ENCODE measurements at regions of chr5 and their contacts with region 1.

Region 1: DNA sequence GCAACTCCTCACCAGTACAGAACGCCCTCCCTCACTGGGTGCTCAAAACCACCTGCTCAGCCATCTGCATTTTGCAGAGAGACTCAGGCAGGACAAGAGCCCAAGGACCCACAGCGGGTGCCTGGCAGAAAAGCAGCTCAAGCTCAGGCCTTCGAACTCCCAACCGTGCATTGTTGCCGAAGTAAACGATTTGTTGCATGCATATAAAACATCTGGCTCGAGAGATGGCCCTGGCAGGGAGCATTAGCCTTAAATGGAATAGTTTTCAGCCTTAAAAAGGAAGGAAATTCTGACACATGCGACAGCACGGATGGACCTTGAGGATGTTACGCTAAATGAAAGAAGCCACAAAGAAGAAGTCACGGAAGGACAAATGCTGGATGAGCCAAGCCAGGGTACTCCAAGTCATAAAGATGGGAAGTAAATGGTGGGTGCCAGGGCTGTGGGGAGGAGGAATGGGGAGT is 160.4 kb upstream of the PHYKPL start:
- DNase-seq: no peak
- H3K4me3 ChIP-seq: no peak overlapping the region
- H3K27ac ChIP-seq: no peak overlapping the region
- H3K4me1 ChIP-seq: no peaks in the 10 kb centered on the region
- H3K27me3 ChIP-seq: no peaks in the 10 kb centered on the region
- CTCF ChIP-seq: no peak

Region 2: DNA sequence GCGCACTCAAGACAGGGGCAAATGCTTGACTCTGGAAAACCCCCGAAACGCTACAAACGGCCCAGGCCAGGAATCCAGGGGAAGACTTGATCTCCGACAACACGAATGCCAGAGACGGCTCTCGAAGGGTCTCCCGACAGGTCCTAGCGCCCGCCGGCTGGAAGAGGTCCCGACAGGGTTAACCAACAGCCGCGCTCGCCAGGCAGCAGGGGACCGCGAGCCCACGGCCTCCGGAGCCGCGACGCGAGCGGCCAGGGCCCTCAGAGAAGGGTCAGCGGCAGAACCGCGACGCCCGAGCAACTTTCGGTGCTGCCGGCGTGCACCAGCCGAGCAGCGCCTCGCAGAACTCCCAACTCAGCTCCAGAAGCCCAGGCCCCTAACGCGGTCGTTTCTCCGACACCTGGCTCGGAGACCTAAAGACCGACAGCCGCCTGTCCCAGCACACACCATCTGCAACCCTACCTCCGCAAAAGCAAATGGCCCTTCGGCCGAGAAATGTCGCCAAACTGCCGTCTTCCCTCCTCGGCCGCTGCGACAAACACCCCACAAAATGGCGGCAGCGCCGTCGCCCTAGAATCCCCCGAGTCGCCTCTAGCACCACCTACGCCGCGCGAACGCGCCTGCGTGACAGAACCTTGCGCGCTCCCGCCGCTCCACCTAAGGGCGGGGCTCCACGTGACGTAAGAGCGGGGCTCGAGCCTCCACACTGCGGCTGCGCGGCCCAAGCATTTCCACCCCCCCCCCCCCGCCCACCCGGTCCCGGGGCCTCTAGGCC is 233.7 kb after region 1 on chr5 and contains the start of gene CLK4:
- CTCF ChIA-PET with region 1: no interaction called
- POLR2A ChIA-PET with region 1: interaction called, 10 read pairs
- intact Hi-C with region 1: no loop called
- DNase-seq: peak; percentile 94
- H3K4me3 ChIP-seq: peak within 1 kb of the TSS; percentile 95
- H3K27ac ChIP-seq: peak within 1 kb of the TSS; percentile 97
- H3K4me1 ChIP-seq: peaks cover 21% of the 10 kb centered on the region
- H3K27me3 ChIP-seq: no peaks in the 10 kb centered on the region
- CTCF ChIP-seq: no peak
- total RNA-seq, gene CLK4: 22.2 and 24.2 TPM in 2 replicates